Esophagus squamous epithelium (tissue), 5 donors: ENCODE measurements at regions of chr17 and their contacts with region 1.

Region 1: GRCh38 chr17:76523084-76524037 is 14.1 kb downstream of the CYGB start:
- DNase-seq: no peak
- H3K4me3 ChIP-seq: no peak overlapping the region
- H3K27ac ChIP-seq: no peak overlapping the region
- H3K4me1 ChIP-seq: peaks cover 29 to 46% (median 31%) of the 10 kb centered on the region in 3 donors
- H3K27me3 ChIP-seq: peaks cover 0 to 16% (median 0%) of the 10 kb centered on the region in 4 donors
- CTCF ChIP-seq: peak; percentile 99 to 100 (median 100)
- POLR2A ChIP-seq: no peak

Region 2: GRCh38 chr17:76623271-76624146 is 100.1 kb after region 1 on chr17:
- intact Hi-C with region 1: loop called (anchors 5 kb)
- DNase-seq: no peak
- H3K4me3 ChIP-seq: no peak overlapping the region
- H3K27ac ChIP-seq: no peak overlapping the region
- H3K4me1 ChIP-seq: peaks cover 0 to 12% (median 4%) of the 10 kb centered on the region in 3 donors
- H3K27me3 ChIP-seq: no peaks in the 10 kb centered on the region
- CTCF ChIP-seq: peak; percentile 83 to 97 (median 96)
- POLR2A ChIP-seq: no peak

Region 3: DNA sequence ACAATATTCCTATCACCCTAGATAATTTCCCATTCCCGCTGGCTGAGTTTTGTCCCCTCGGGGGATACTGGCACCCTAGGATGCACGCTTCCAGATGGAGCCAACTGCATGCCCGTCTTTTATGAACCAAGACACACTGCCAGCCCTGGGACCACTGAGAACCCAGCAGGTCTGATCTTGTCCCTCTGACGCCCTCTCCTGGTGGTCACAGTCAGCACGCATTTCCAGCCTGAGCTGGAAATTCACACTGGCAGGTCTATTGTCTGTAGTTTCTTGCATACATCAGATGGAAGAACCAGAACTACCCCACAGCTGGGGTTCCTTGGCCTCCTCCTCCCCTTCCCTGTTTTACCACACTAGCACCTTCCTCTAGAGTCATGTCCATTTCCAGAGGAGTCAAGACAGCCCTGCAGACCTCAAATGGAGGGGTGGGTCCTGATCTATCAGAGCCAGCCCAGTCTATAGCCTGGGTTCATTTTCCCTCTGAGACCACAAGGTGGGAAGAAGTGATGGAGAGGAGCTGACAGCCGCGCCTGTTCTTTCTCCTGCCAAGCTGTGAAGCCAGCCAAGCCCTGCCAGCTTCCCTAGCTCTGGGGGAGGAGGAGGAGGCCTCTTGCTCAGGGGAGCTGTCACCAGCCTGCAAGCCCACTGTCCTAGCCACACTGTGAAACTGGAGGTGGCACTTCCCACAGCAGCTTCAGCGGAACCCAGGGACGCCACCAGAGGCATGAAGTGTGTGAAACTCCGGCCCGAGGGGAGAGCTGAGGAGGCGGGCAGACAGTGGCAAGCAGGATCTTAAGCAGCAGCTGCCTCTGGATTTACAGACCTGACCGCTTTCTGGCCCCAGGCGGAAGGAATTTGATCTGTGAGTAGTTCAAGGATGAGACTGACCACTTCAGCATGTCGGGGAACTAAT is 158.1 kb after region 1 on chr17:
- intact Hi-C with region 1: loop called (anchors 10 kb)
- DNase-seq: no peak
- H3K4me3 ChIP-seq: no peak overlapping the region
- H3K27ac ChIP-seq: peak overlapping the region; percentile 30 to 73 (median 62)
- H3K4me1 ChIP-seq: peaks cover 14 to 57% (median 23%) of the 10 kb centered on the region in 3 donors
- H3K27me3 ChIP-seq: no peaks in the 10 kb centered on the region
- CTCF ChIP-seq: peak; percentile 48 to 91 (median 77)
- POLR2A ChIP-seq: no peak